Cardiac septum (tissue), 1 donor: ENCODE measurements at regions of chr17 and their contacts with region 1.

Region 1: DNA sequence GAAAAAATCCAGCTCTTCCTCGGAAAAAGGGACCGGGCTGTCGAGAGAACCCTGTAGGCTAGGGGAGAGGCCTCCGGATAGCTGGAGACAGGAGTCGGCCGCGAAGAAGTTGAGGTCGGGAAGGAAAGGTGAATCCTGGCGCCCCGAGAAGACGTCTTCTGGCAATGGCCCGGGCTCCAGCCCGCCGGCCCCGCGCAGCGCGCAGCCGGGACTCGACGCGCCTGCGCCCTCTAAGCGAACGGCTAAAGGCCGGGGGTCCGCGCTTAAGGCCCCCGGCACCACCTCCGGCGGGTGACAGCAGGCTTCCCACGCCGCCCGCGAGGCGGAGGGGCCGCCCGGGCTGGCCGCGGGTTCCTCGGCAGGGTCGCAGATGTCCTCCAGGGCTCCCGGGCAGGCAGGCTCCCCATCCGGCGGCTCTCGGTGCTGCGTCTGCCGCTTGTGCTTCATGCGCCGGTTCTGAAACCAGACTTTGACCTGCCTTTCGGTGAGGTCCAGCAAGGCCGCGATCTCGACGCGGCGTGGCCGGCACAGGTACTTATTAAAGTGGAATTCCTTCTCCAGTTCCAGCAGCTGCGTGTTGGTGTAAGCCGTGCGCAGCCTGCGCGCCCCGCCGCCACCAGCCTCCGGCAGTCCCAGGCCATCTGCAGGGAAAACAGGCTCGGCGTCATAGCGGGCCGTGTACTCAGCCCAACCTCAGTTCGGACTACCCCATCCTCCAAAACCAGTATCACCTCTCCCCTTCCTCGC is 1.6 kb downstream of the HOXB2 start:
- DNase-seq: peak; percentile 72

Region 2: GRCh38 chr17:48047741-48048383 is 495.4 kb before region 1 on chr17 and contains the start of gene NFE2L1:
- intact Hi-C with region 1: loop called (anchors 10 kb)
- DNase-seq: peak; percentile 100
- total RNA-seq, gene NFE2L1: 604 TPM

Region 3: DNA sequence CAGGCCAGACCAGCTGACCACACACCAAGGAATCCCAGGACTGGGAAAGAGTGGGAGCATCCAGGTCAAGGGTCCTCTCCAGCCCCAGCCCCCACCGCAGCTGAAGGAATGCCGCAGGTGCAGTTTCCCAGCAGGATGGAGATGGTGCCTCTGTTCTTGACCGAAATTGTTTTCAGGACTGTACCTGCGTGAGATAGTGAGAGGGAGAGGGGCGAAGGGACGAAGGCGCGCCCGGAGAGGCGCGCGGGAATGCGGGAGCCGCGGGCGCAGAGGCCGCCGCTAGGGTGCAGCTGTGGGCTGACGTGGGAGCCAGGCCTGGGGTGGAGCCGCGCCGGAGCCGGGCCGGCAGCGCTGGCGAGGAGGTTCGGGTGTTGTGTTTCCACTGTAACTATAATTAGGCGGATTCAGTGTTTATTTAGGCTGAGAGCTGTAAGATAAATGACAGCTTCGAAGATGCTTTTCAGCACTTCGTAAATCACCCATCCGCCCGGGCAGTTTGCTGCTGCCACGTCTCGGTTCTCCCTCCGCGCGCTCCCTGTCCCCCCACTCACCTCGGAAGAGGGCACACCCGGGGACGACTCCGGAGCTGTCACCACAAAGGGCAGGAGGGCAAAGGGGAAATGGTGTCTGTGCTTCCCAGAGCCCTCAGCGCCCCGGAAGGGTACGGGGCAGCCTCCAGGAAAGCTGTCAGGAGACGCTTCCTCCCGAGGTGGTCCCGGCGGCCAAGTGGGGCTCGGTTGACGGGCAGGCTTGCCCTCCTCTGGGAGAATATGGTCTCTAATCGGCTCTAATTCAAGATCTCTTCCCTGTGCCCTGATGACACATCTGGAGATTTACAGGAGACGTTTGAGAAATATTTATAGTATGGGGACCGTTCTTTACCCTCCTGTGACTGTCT is 50.6 kb before region 1 on chr17:
- intact Hi-C with region 1: loop called (anchors 5 kb)
- DNase-seq: peak; percentile 79

Region 4: GRCh38 chr17:48578616-48579470 is 35.6 kb after region 1 on chr17:
- intact Hi-C with region 1: loop called (anchors 1 kb)
- DNase-seq: no peak